IMR-90 (cell line): ENCODE measurements at regions of chr7 and their contacts with region 1.

Region 1: DNA sequence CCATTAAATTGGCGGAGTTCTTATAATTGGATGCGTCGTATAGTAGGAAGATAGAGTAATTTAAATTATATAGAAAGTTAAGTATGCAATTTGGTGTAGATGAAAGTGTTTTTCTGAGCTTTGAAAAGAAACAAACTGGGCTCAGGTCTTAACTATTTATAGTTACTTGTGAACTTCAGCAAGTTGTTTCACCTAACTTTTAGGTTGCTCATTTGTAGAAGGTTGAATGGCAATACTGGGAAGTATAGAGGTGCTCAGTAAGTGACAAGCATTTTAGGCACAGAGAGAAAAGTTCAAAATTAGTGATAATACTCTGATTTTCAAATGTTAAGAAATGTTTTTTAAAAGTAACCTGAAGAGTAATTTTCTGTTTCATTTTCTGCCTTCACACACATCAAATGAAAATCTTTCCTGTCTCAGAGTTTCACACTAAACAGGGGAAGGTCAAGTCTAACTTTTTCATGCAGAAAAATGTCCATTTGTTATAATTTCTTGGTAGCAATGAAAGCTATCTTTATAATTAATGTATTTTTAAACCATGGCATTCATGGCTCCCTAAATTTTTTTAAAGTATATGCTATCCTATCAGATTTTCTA is 146.5 kb downstream of the PHF14 start:
- DNase-seq: no peak
- ATAC-seq: no peak
- H3K4me3 ChIP-seq: no peak overlapping the region
- H3K27ac ChIP-seq: no peak overlapping the region
- H3K4me1 ChIP-seq: no peaks in the 10 kb centered on the region; the same call in 1 of the 2 replicates
- H3K27me3 ChIP-seq: no peaks in the 10 kb centered on the region
- CTCF ChIP-seq: no peak
- POLR2A ChIP-seq: no peak
- RAD21 ChIP-seq: no peak

Region 2: GRCh38 chr7:11078247-11078834 is 41.8 kb before region 1 on chr7:
- CTCF ChIA-PET with region 1: no interaction called
- POLR2A ChIA-PET with region 1: interaction called, 10 read pairs
- dilution Hi-C with region 1: no loop called
- in situ Hi-C with region 1: no loop called
- intact Hi-C with region 1: no loop called
- DNase-seq: no peak
- ATAC-seq: no peak
- H3K4me3 ChIP-seq: no peak overlapping the region
- H3K27ac ChIP-seq: no peak overlapping the region
- H3K4me1 ChIP-seq: no peaks in the 10 kb centered on the region; the same call in 1 of the 2 replicates
- H3K27me3 ChIP-seq: no peaks in the 10 kb centered on the region
- CTCF ChIP-seq: no peak
- POLR2A ChIP-seq: no peak
- RAD21 ChIP-seq: no peak

Region 3: DNA sequence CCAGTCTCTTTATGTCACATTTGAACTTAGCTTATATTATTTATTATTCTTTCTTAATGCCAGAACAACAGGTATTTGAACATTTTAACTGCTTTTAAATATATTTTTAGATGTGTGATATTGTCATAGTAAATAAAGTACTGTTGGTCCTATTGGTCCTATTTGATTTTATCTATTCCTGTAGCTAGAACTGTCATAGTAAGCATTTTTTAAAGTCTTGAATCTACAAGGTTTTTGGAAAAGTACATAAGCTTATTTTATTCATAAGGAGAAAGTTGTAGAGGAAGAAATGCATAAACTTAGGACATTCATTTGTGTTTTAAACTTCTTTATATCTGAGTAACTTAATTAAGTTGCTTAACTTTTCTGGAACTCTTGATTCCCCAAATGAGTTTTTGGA is 10.5 kb before region 1 on chr7:
- CTCF ChIA-PET with region 1: no interaction called
- POLR2A ChIA-PET with region 1: no interaction called
- dilution Hi-C with region 1: no loop called
- in situ Hi-C with region 1: no loop called
- intact Hi-C with region 1: loop called (anchors 1 kb)
- DNase-seq: no peak
- ATAC-seq: no peak
- H3K4me3 ChIP-seq: no peak overlapping the region
- H3K27ac ChIP-seq: no peak overlapping the region
- H3K4me1 ChIP-seq: no peaks in the 10 kb centered on the region
- H3K27me3 ChIP-seq: no peaks in the 10 kb centered on the region
- CTCF ChIP-seq: no peak
- POLR2A ChIP-seq: no peak
- RAD21 ChIP-seq: no peak

Region 4: DNA sequence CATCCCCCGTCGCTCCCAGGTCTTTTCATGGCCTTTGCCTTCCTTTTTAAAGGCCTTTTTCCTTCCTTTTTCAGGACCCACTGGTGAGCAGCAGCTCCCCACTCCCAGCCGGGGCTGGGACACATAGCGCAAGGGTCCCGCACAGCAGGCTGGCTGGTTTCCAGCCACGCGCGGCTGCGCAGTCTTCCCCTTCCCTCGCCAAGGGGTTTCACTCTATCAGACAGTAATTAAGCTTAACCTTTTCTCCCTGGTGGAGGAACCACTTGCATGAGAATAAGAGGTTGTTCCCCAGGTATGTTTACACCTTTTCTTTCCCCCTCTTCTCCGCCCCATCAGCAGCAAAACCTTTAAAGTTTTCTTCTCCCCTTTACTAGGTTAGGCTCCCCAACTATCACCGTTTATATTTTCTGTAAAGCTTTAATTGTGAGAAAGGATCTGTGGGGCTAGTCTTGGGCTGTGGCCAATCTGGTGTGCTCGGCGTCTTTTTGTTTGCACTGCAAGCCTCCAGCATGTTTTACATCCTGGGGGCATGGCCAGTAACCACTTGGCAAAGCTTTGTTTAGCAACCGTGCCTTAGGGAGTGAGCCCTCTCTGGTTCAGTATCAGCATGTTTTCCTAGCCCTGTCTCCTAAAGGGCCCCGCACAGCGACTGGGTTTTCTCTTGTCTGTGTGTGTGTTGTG is 73.1 kb after region 1 on chr7:
- CTCF ChIA-PET with region 1: no interaction called
- POLR2A ChIA-PET with region 1: no interaction called
- dilution Hi-C with region 1: no loop called
- in situ Hi-C with region 1: no loop called
- intact Hi-C with region 1: no loop called
- DNase-seq: no peak
- ATAC-seq: peak; percentile 75
- H3K4me3 ChIP-seq: peak overlapping the region; percentile 33; the same call in 1 of the 2 replicates
- H3K27ac ChIP-seq: no peak overlapping the region
- H3K4me1 ChIP-seq: peaks cover 4% of the 10 kb centered on the region; the same call in 1 of the 2 replicates
- H3K27me3 ChIP-seq: peaks cover 1% of the 10 kb centered on the region; the same call in 1 of the 2 replicates
- CTCF ChIP-seq: no peak
- POLR2A ChIP-seq: no peak
- RAD21 ChIP-seq: no peak